Caco-2 (cell line): ENCODE measurements at regions of chr2 and their contacts with region 1.

Region 1: GRCh38 chr2:229477269-229477765 is 206.2 kb upstream of the PID1 start:
- DNase-seq: no peak
- H3K4me3 ChIP-seq: no peak overlapping the region
- H3K4me3 Mint-ChIP-seq: no peak overlapping the region
- H3K27ac Mint-ChIP-seq: no peak overlapping the region
- H3K4me1 ChIP-seq: no peaks in the 10 kb centered on the region
- H3K4me1 Mint-ChIP-seq: no peaks in the 10 kb centered on the region
- H3K27me3 ChIP-seq: no peaks in the 10 kb centered on the region
- H3K27me3 Mint-ChIP-seq: peaks cover 9% of the 10 kb centered on the region
- CTCF ChIP-seq: no peak

Region 2: GRCh38 chr2:229218329-229218921 is 258.9 kb before region 1 on chr2:
- CTCF ChIA-PET with region 1: no interaction called
- POLR2A ChIA-PET with region 1: interaction called, 12 read pairs
- intact Hi-C with region 1: no loop called
- DNase-seq: no peak
- H3K4me3 ChIP-seq: no peak overlapping the region
- H3K4me3 Mint-ChIP-seq: no peak overlapping the region
- H3K27ac Mint-ChIP-seq: no peak overlapping the region
- H3K4me1 ChIP-seq: no peaks in the 10 kb centered on the region
- H3K4me1 Mint-ChIP-seq: no peaks in the 10 kb centered on the region
- H3K27me3 ChIP-seq: no peaks in the 10 kb centered on the region
- H3K27me3 Mint-ChIP-seq: no peaks in the 10 kb centered on the region
- CTCF ChIP-seq: no peak

Region 3: DNA sequence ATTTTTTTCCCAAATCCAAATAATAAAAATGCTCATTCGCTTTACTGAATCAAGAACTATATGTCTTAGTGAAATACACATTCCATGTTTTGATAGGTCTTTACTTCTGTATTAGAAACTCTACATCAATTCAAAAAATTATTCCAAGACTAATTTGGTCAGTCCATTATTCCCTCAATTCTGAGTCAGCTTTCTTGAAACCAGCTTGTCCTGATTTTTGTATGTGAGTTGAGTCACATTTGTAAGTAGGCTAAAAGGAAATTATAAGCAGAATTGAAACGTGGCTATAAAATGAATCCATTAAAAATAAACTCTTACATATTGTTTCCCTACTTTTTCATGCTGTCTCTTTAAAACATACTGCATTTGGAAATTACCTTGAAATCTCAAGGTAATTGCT is 124.1 kb after region 1 on chr2:
- CTCF ChIA-PET with region 1: no interaction called
- POLR2A ChIA-PET with region 1: no interaction called
- intact Hi-C with region 1: no loop called
- DNase-seq: no peak
- H3K4me3 ChIP-seq: no peak overlapping the region
- H3K4me3 Mint-ChIP-seq: no peak overlapping the region
- H3K27ac Mint-ChIP-seq: no peak overlapping the region
- H3K4me1 ChIP-seq: no peaks in the 10 kb centered on the region
- H3K4me1 Mint-ChIP-seq: no peaks in the 10 kb centered on the region
- H3K27me3 ChIP-seq: no peaks in the 10 kb centered on the region
- H3K27me3 Mint-ChIP-seq: peaks cover 3% of the 10 kb centered on the region
- CTCF ChIP-seq: no peak

Region 4: GRCh38 chr2:229634601-229635370 is 157.5 kb after region 1 on chr2:
- CTCF ChIA-PET with region 1: no interaction called
- POLR2A ChIA-PET with region 1: no interaction called
- intact Hi-C with region 1: no loop called
- DNase-seq: no peak
- H3K4me3 ChIP-seq: no peak overlapping the region
- H3K4me3 Mint-ChIP-seq: no peak overlapping the region
- H3K27ac Mint-ChIP-seq: no peak overlapping the region
- H3K4me1 ChIP-seq: no peaks in the 10 kb centered on the region
- H3K4me1 Mint-ChIP-seq: no peaks in the 10 kb centered on the region
- H3K27me3 ChIP-seq: no peaks in the 10 kb centered on the region
- H3K27me3 Mint-ChIP-seq: no peaks in the 10 kb centered on the region
- CTCF ChIP-seq: no peak